Activated T-helper 2 cell treated with anti-CD3 and anti-CD28 coated beads, Interferon-gamma antibody, Interleukin-2, Interleukin-4, amounts not matched to agents 10 μg/mL and 5 μg/mL and 100 μg/mL, durations not matched to agents 14 hours and 24 hours and 36 hours (primary cell): ENCODE measurements at regions of chr7 and their contacts with region 1.

Region 1: DNA sequence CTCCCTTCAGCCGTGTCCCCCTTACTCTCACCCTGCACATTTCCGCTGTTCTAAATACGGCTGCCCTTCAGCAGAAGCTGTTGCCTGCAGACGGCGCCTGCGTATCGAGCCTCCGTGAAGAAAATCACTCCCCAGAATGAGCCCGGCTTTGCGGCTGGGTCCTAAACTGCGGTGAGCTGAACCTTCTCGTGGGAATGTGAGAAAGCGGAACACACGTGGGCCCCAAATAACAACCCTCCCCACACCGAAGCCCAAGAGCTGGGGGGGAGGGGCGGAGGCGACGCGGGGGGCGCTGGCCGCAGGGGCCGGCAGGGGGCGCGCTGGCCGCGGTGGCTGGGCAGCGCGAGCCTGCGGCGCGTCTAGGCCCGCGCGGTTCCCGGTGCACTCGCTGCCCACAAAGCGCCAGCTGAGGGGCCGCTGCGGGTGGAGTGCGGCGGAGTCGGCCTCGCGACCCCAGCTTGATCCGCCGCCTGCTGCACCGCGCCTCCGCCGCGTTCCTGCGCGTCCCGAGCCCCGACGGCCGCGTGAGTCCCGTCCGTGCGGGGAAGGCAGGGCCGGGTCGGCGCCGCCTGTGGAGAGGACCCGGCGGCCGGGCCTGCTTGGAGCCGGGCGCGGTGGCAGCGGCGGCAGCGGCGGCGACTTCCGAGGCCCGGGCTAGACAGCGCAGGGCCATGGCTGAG is at the start of gene ZNF398:
- DNase-seq: peak; percentile 74
- H3K4me3 Mint-ChIP-seq: peak within 1 kb of the TSS; percentile 90
- H3K27ac Mint-ChIP-seq: peak within 1 kb of the TSS; percentile 93
- H3K4me1 Mint-ChIP-seq: peaks cover 24% of the 10 kb centered on the region
- H3K27me3 Mint-ChIP-seq: no peaks in the 10 kb centered on the region
- total RNA-seq, gene ZNF398: 15.9 and 16.9 TPM in 2 replicates

Region 2: GRCh38 chr7:148563583-148564274 is 583.5 kb before region 1 on chr7:
- intact Hi-C with region 1: no loop called
- DNase-seq: no peak
- H3K4me3 Mint-ChIP-seq: peak overlapping the region; percentile 44
- H3K27ac Mint-ChIP-seq: peak overlapping the region; percentile 75
- H3K4me1 Mint-ChIP-seq: peaks cover 16% of the 10 kb centered on the region
- H3K27me3 Mint-ChIP-seq: peaks cover 21% of the 10 kb centered on the region

Region 3: GRCh38 chr7:149067876-149068275 is 79.3 kb before region 1 on chr7:
- intact Hi-C with region 1: no loop called
- DNase-seq: no peak
- H3K4me3 Mint-ChIP-seq: no peak overlapping the region
- H3K27ac Mint-ChIP-seq: no peak overlapping the region
- H3K4me1 Mint-ChIP-seq: peaks cover 5% of the 10 kb centered on the region
- H3K27me3 Mint-ChIP-seq: no peaks in the 10 kb centered on the region

Region 4: GRCh38 chr7:149090397-149091195 is 56.6 kb before region 1 on chr7 and contains the start of gene ZNF786:
- intact Hi-C with region 1: loop called (anchors 1 kb)
- DNase-seq: peak; percentile 85
- H3K4me3 Mint-ChIP-seq: peak within 1 kb of the TSS; percentile 100
- H3K27ac Mint-ChIP-seq: peak within 1 kb of the TSS; percentile 100
- H3K4me1 Mint-ChIP-seq: peaks cover 12% of the 10 kb centered on the region
- H3K27me3 Mint-ChIP-seq: no peaks in the 10 kb centered on the region
- total RNA-seq, gene ZNF786: 10.0 and 10.3 TPM in 2 replicates

Region 5: DNA sequence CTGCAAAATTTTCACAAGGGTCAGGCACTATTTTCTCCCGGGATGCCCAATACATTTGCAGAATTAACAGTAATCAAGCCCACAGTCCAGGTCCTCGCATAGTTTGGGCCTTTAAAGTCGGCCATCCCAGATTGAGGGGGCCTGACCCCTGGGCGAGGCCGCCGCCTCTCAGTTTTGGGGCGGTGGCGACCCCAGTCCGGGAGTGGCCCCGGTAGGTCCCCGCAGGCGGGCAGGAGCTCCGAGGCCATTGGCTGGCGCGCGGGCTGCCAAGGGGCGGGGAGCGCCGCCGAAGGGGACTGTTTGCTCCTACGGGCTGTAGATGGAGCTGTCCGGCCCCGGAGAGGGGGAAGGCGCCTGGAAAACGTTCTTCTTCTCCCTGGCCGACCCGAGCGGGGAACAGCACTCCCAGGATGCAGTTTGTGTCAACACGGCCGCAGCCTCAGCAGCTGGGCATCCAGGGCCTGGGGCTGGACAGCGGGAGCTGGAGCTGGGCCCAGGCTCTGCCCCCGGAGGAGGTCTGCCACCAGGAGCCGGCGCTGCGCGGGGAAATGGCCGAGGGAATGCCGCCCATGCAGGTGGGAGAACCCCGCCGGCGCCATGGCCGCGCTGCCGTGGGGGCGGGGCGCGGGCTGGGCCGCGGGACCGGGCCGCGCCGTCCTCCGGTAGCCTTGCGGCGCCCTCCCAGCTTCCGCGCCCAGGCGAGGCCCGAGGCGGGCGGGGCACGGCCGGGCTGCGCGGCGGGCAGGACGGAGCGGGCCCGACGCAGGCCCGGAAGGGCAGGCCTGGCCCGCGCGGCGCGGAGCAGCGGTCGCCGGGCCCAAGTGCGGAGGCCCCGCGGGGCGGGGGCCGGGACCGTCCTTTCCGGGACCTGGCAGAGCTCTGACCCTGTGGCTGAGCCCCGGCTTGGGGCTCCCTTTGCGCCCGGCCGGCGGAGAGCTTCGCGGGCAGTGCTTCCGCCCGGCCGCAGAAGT is 48.3 kb after region 1 on chr7 and contains the start of gene ZNF282:
- intact Hi-C with region 1: loop called (anchors 2 kb)
- DNase-seq: peak; percentile 76
- H3K4me3 Mint-ChIP-seq: peak within 1 kb of the TSS; percentile 89
- H3K27ac Mint-ChIP-seq: peak within 1 kb of the TSS; percentile 88
- H3K4me1 Mint-ChIP-seq: peaks cover 41% of the 10 kb centered on the region
- H3K27me3 Mint-ChIP-seq: no peaks in the 10 kb centered on the region
- total RNA-seq, gene ZNF282: 116 and 118 TPM in 2 replicates

Region 6: DNA sequence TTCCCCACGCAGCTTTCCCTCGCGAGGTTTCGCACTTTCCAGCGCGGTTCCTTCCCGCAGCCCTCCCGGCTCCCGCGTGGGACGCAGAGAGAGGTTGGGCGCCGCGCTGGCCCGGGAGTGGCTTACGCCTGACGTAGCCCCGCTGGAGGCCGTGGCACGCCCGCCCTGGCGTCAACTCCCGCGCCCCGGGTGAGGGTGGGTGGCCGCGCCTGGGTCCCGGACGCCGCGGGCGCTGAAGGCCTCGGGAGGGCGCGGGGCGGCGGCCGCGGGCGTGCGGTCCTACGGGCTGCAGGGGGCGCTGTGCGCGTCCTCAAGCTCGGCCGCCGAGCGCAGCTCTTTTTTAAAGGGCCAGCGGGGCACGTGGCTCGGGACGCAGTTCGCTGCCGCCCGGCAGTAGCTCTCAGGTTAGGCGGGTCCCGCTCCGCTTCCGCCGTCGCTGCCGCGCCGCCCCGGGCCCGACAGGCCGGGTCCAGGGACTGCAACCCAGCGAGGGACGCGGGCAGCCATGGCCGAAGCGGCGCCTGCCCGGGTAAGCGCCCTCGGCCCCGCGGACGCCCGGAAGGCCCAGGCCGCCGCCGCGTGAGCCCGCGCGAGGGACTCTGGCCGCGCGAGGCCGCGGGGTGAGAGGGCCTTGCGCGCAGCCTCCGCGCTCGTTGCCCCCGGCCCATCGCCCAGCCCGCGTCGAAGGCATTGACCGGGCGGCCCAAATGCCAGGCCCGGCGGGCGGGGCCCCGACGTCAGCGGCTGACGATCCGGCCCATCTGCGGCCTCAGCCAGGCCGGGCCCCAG is 114.8 kb after region 1 on chr7 and contains the start of gene ZNF783:
- intact Hi-C with region 1: loop called (anchors 1 kb)
- DNase-seq: peak; percentile 84
- H3K4me3 Mint-ChIP-seq: peak within 1 kb of the TSS; percentile 82
- H3K27ac Mint-ChIP-seq: peak within 1 kb of the TSS; percentile 93
- H3K4me1 Mint-ChIP-seq: peaks cover 27% of the 10 kb centered on the region
- H3K27me3 Mint-ChIP-seq: no peaks in the 10 kb centered on the region
- total RNA-seq, gene ZNF783: 25.0 and 26.8 TPM in 2 replicates

Region 7: GRCh38 chr7:149497456-149498261 is 350.4 kb after region 1 on chr7 and contains the start of gene ZNF746:
- intact Hi-C with region 1: loop called (anchors 5 kb)
- DNase-seq: peak; percentile 78
- H3K4me3 Mint-ChIP-seq: peak within 1 kb of the TSS; percentile 96
- H3K27ac Mint-ChIP-seq: peak within 1 kb of the TSS; percentile 97
- H3K4me1 Mint-ChIP-seq: peaks cover 32% of the 10 kb centered on the region
- H3K27me3 Mint-ChIP-seq: no peaks in the 10 kb centered on the region
- total RNA-seq, gene ZNF746: 23.7 and 26.4 TPM in 2 replicates